H1 (cell line): ENCODE measurements at regions of chr2 and their contacts with region 1.

Region 1: DNA sequence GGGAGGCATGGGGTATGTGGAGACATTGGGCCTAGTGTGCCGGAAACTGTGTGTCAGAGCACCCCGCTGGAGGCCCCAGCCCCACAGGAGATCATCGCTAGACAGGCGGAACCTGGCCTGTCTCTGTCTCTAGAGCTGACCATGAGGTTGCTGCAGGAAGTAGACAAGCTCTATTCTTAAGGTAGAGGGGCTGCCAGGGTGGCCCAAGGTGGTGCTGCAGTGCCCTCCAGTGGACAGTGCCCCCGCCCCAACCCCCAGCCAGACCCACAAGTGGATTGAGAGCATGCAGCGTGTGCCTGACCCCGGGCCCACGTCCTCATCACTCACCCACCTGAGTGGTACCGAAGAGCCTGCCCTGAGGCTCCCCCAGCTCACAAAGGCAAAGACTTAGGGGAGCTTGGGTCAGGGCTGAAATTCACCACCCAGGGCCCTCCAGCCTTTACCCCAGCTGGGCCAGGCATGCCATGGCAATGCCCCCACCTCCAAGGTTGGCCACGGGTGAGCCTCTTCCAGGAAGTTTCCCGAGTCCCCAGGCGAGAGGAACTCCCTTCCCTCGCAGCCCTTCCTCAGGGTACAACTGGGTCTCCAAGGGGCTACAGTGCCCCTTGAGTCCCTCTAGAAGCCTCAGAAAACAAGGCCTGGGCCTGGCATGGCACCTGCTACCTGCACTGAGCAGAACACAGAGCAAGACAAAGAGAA is 155.0 kb downstream of the TTC32 start:
- DNase-seq: peak; percentile 47 to 83
- H3K4me3 ChIP-seq: no peak overlapping the region
- H3K27ac ChIP-seq: no peak overlapping the region
- H3K4me1 ChIP-seq: no peaks in the 10 kb centered on the region
- H3K27me3 ChIP-seq: no peaks in the 10 kb centered on the region
- CTCF ChIP-seq: peak; percentile 77 to 84 (median 77)
- EP300 ChIP-seq: no peak
- POLR2A ChIP-seq: no peak
- RAD21 ChIP-seq: peak; percentile 92 to 96

Region 2: GRCh38 chr2:19362755-19363473 is 383.8 kb before region 1 on chr2:
- CTCF ChIA-PET with region 1: interaction called, 55 read pairs
- POLR2A ChIA-PET with region 1: no interaction called
- DNase-seq: peak in 1 of 2 experiments; percentile 80
- H3K4me3 ChIP-seq: peak overlapping the region in 3 of 4 experiments; percentile 23 to 51 (median 24); a peak in 6 of 8 replicates
- H3K27ac ChIP-seq: no peak overlapping the region
- H3K4me1 ChIP-seq: peaks cover 0 to 23% (median 6%) of the 10 kb centered on the region in 4 experiments; a peak in 6 of 7 replicates
- H3K27me3 ChIP-seq: peaks cover 58 to 81% (median 70%) of the 10 kb centered on the region in 4 experiments
- CTCF ChIP-seq: peak; percentile 64 to 65 (median 65)
- EP300 ChIP-seq: no peak
- POLR2A ChIP-seq: no peak
- RAD21 ChIP-seq: peak; percentile 74 to 76

Region 3: DNA sequence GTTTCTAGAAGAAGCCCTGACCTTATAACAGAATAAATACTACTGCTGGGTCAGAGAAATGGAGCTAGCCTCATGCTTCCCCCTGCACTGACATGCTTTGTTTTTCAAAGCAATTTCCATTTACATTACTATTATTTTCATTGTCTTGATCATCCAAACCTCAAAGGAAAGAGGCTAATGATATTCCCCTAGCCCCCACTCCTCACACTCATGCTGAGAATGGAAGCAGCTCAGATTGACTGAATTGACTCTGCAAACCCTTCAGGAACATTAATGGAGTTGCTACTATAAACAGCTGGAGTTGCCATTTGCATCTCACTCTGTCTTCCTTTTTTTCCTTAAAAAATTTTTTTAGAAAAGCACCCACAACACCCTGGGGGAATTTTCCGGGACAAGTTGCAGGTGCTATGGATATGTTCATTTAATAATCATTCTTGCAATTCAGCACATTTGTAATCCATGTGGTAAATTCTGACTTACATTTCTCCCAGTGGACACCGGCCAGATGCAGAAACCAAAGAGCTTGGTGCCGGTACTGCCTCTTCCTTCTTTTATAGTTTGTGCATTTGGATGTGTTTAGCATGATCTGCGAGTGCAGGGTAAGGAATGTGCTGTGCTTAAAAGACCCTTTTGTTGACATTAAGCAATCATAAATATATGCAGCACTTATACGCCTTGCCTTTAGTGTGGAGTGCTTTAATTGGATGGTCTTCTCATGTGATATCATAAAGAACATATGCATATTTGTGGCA is 285.1 kb before region 1 on chr2:
- CTCF ChIA-PET with region 1: no interaction called
- POLR2A ChIA-PET with region 1: no interaction called
- DNase-seq: no peak
- H3K4me3 ChIP-seq: peak overlapping the region in 1 of 4 experiments; percentile 29; a peak in 1 of 8 replicates
- H3K27ac ChIP-seq: no peak overlapping the region
- H3K4me1 ChIP-seq: peaks cover 0 to 23% (median 13%) of the 10 kb centered on the region in 4 experiments; a peak in 6 of 7 replicates
- H3K27me3 ChIP-seq: no peaks in the 10 kb centered on the region
- CTCF ChIP-seq: no peak
- EP300 ChIP-seq: no peak
- POLR2A ChIP-seq: no peak
- RAD21 ChIP-seq: no peak

Region 4: DNA sequence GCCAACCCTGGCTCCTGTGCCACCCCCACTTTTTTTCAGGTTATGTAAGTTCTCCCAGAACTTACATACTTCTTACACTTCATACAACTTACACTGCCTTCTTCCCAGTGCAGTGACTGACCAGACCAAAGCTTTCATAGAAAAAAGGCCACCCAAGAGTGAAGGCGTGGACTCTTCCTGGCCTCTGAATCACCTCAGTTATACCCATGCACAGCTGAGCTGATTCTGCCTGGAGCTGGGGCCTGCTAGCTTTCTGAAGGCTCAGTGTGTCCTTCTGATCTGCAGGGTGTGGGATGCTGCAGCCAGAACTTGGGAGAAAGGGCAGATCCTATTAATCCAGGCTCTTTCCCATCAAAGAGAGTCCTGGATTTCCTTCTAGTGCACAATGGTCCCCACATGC is 61.0 kb before region 1 on chr2:
- CTCF ChIA-PET with region 1: interaction called, 19 read pairs
- POLR2A ChIA-PET with region 1: no interaction called
- DNase-seq: no peak
- H3K4me3 ChIP-seq: no peak overlapping the region
- H3K27ac ChIP-seq: no peak overlapping the region
- H3K4me1 ChIP-seq: no peaks in the 10 kb centered on the region
- H3K27me3 ChIP-seq: no peaks in the 10 kb centered on the region
- CTCF ChIP-seq: no peak
- EP300 ChIP-seq: no peak
- POLR2A ChIP-seq: no peak
- RAD21 ChIP-seq: no peak

Region 5: GRCh38 chr2:19714926-19715325 is 31.8 kb before region 1 on chr2:
- CTCF ChIA-PET with region 1: interaction called, 13 read pairs
- POLR2A ChIA-PET with region 1: no interaction called
- DNase-seq: no peak
- H3K4me3 ChIP-seq: no peak overlapping the region
- H3K27ac ChIP-seq: no peak overlapping the region
- H3K4me1 ChIP-seq: no peaks in the 10 kb centered on the region
- H3K27me3 ChIP-seq: no peaks in the 10 kb centered on the region; a peak in 1 of 7 replicates
- CTCF ChIP-seq: no peak
- EP300 ChIP-seq: no peak
- POLR2A ChIP-seq: no peak
- RAD21 ChIP-seq: no peak

Region 6: GRCh38 chr2:19762142-19762541 is 15.4 kb after region 1 on chr2:
- CTCF ChIA-PET with region 1: interaction called, 31 read pairs
- POLR2A ChIA-PET with region 1: no interaction called
- DNase-seq: no peak
- H3K4me3 ChIP-seq: no peak overlapping the region
- H3K27ac ChIP-seq: no peak overlapping the region
- H3K4me1 ChIP-seq: no peaks in the 10 kb centered on the region
- H3K27me3 ChIP-seq: no peaks in the 10 kb centered on the region
- CTCF ChIP-seq: no peak
- EP300 ChIP-seq: no peak
- POLR2A ChIP-seq: no peak
- RAD21 ChIP-seq: no peak

Region 7: DNA sequence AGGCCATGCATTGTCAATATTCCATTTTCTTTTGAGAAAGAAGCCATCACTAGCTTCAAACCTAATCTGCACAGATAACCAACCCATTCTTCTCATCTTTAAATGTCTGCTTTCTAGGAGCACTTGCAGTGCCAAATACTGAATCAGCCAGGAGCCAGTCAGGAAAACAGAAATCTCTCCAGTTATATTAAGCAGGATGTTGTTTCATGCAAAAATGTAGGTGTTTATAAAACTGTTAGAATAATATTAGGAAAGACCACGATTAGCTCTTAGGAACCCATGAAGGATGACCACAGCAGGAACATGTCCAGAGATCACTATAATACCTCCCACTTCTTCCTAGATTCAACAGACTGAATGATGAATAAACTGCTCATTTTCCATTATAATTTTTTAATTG is 69.0 kb after region 1 on chr2:
- CTCF ChIA-PET with region 1: no interaction called
- POLR2A ChIA-PET with region 1: no interaction called
- DNase-seq: no peak
- H3K4me3 ChIP-seq: no peak overlapping the region
- H3K27ac ChIP-seq: no peak overlapping the region
- H3K4me1 ChIP-seq: no peaks in the 10 kb centered on the region
- H3K27me3 ChIP-seq: no peaks in the 10 kb centered on the region
- CTCF ChIP-seq: no peak
- EP300 ChIP-seq: no peak
- POLR2A ChIP-seq: no peak
- RAD21 ChIP-seq: no peak

Region 8: GRCh38 chr2:19857806-19858205 is 111.0 kb after region 1 on chr2:
- CTCF ChIA-PET with region 1: interaction called, 33 read pairs
- POLR2A ChIA-PET with region 1: no interaction called
- DNase-seq: no peak
- H3K4me3 ChIP-seq: no peak overlapping the region
- H3K27ac ChIP-seq: no peak overlapping the region
- H3K4me1 ChIP-seq: no peaks in the 10 kb centered on the region
- H3K27me3 ChIP-seq: no peaks in the 10 kb centered on the region
- CTCF ChIP-seq: no peak
- EP300 ChIP-seq: no peak
- POLR2A ChIP-seq: no peak
- RAD21 ChIP-seq: no peak

Region 9: GRCh38 chr2:19993731-19994130 is 247.0 kb after region 1 on chr2:
- CTCF ChIA-PET with region 1: no interaction called
- POLR2A ChIA-PET with region 1: no interaction called
- DNase-seq: no peak
- H3K4me3 ChIP-seq: no peak overlapping the region
- H3K27ac ChIP-seq: no peak overlapping the region
- H3K4me1 ChIP-seq: peaks cover 0 to 2% (median 0%) of the 10 kb centered on the region in 4 experiments; a peak in 1 of 7 replicates
- H3K27me3 ChIP-seq: no peaks in the 10 kb centered on the region
- CTCF ChIP-seq: no peak
- EP300 ChIP-seq: no peak
- POLR2A ChIP-seq: no peak
- RAD21 ChIP-seq: no peak